Endothelial cell of umbilical vein (primary cell): ENCODE measurements at regions of chr12 and their contacts with region 1.

Region 1: GRCh38 chr12:53213348-53213747 is 6.3 kb upstream of the ITGB7 start:
- DNase-seq: peak; percentile 69
- H3K4me3 ChIP-seq: no peak overlapping the region
- H3K27ac ChIP-seq: no peak overlapping the region
- H3K4me1 ChIP-seq: peaks cover 31% of the 10 kb centered on the region
- H3K27me3 ChIP-seq: no peaks in the 10 kb centered on the region
- CTCF ChIP-seq: peak; percentile 87 to 95
- POLR2A ChIP-seq: no peak

Region 2: GRCh38 chr12:53180220-53180930 is 33.0 kb before region 1 on chr12 and contains the starts of genes CSAD and ZNF740:
- CTCF ChIA-PET with region 1: interaction called, 10 read pairs
- POLR2A ChIA-PET with region 1: no interaction called
- dilution Hi-C with region 1: no loop called
- intact Hi-C with region 1: no loop called
- DNase-seq: peak; percentile 96
- H3K4me3 ChIP-seq: peak within 1 kb of the TSS; percentile 60 to 91 (median 73)
- H3K27ac ChIP-seq: peak within 1 kb of the TSS; percentile 50
- H3K4me1 ChIP-seq: peaks cover 22% of the 10 kb centered on the region
- H3K27me3 ChIP-seq: no peaks in the 10 kb centered on the region
- CTCF ChIP-seq: no peak
- POLR2A ChIP-seq: peak; percentile 87
- total RNA-seq, gene CSAD: 21.1 and 22.0 TPM in 2 replicates
- total RNA-seq, gene ZNF740: 34.9 and 38.1 TPM in 2 replicates

Region 3: GRCh38 chr12:53241623-53242412 is 28.5 kb after region 1 on chr12:
- CTCF ChIA-PET with region 1: interaction called, 38 read pairs
- POLR2A ChIA-PET with region 1: interaction called, 3 read pairs
- dilution Hi-C with region 1: no loop called
- intact Hi-C with region 1: no loop called
- DNase-seq: no peak
- H3K4me3 ChIP-seq: no peak overlapping the region
- H3K27ac ChIP-seq: no peak overlapping the region
- H3K4me1 ChIP-seq: no peaks in the 10 kb centered on the region
- H3K27me3 ChIP-seq: peaks cover 16 to 18% of the 10 kb centered on the region in 2 experiments
- CTCF ChIP-seq: no peak
- POLR2A ChIP-seq: no peak

Region 4: DNA sequence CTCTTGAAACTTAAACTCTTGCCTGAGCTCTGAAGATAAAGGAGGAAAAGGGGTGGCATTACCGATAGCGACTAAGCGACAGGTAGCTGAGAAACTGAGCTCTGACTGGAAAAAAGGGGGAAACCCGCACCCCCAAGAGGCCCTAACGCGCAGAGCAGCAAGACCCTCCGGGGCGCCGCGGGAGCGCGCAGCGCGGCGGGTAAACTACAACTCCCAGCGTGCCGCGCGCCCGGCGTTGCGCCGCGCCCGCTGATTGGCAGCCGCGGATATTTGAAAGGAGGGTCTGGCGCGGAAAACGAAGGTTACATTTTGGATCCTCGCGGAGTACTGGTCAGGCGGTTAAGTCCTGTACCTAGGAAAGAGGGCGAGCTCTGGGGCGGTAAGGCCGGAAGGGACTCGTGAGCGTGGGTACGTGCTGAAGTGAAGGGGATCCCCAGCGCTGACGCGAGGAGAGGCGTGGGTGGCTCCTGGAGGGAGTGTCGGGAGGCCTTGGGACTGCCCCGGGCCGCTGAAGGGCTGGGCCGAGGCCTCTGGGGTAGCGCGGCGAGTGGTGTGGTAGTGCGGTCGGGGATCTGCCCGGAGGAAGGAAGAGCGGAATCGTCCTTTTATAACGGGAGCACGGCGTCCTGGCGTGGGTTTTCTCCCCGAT is 54.8 kb after region 1 on chr12 and contains the start of gene ESPL1:
- CTCF ChIA-PET with region 1: interaction called, 128 read pairs
- POLR2A ChIA-PET with region 1: no interaction called
- dilution Hi-C with region 1: no loop called
- intact Hi-C with region 1: loop called (anchors 1 kb)
- DNase-seq: peak; percentile 82
- H3K4me3 ChIP-seq: peak within 1 kb of the TSS; percentile 61 to 85 (median 77)
- H3K27ac ChIP-seq: no peak within 1 kb of the TSS
- H3K4me1 ChIP-seq: peaks cover 24% of the 10 kb centered on the region
- H3K27me3 ChIP-seq: no peaks in the 10 kb centered on the region
- CTCF ChIP-seq: peak; percentile 35 to 51
- POLR2A ChIP-seq: peak; percentile 15
- total RNA-seq, gene ESPL1: 39.3 and 42.7 TPM in 2 replicates

Region 5: DNA sequence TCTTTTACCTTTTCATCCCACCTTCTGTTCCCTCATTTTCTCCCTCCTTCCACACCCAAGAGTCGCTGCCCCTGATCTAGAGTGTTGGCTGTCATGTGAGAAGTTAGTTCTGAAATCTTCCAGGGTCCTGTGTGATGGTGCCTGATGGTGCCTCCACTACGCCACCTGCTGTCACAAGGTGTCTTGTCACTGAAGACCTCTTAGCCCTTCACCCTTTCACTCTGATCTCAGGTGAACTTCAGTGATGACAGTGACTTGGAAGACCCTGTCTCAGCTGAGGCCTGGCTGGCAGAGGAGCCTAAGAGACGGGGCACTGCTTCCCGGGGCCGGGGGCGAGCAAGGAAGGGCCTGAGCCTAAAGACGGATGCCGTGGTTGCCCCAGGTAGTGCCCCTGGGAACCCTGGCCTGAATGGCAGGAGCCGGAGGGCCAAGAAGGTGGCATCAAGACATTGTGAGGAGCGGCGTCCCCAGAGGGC is 74.4 kb after region 1 on chr12:
- CTCF ChIA-PET with region 1: interaction called, 366 read pairs
- POLR2A ChIA-PET with region 1: no interaction called
- dilution Hi-C with region 1: no loop called
- intact Hi-C with region 1: loop called (anchors 1 kb)
- DNase-seq: peak; percentile 66
- H3K4me3 ChIP-seq: no peak overlapping the region
- H3K27ac ChIP-seq: no peak overlapping the region
- H3K4me1 ChIP-seq: peaks cover 17% of the 10 kb centered on the region
- H3K27me3 ChIP-seq: no peaks in the 10 kb centered on the region
- CTCF ChIP-seq: peak; percentile 45 to 65
- POLR2A ChIP-seq: no peak

Region 6: GRCh38 chr12:53344824-53345485 is 131.6 kb after region 1 on chr12:
- CTCF ChIA-PET with region 1: interaction called, 59 read pairs
- POLR2A ChIA-PET with region 1: no interaction called
- dilution Hi-C with region 1: no loop called
- intact Hi-C with region 1: no loop called
- DNase-seq: peak; percentile 72
- H3K4me3 ChIP-seq: peak overlapping the region; percentile 43 to 47 (median 45)
- H3K27ac ChIP-seq: peak overlapping the region; percentile 40
- H3K4me1 ChIP-seq: peaks cover 13% of the 10 kb centered on the region
- H3K27me3 ChIP-seq: peaks cover 0 to 4% of the 10 kb centered on the region in 2 experiments
- CTCF ChIP-seq: peak; percentile 57 to 86
- POLR2A ChIP-seq: peak; percentile 70